Activated CD4-positive, alpha-beta T cell treated with anti-CD3 and anti-CD28 coated beads, Interleukin-2, amount 10 ng/mL, durations not matched to agents 24 days and 14 days (primary cell): ENCODE measurements at regions of chr2 and their contacts with region 1.

Region 1: GRCh38 chr2:135004005-135004746 is 43.1 kb downstream of the MAP3K19 start:
- DNase-seq: peak; percentile 91
- H3K4me3 Mint-ChIP-seq: peak overlapping the region; percentile 30
- H3K27ac Mint-ChIP-seq: no peak overlapping the region
- H3K4me1 Mint-ChIP-seq: peaks cover 5% of the 10 kb centered on the region
- H3K27me3 Mint-ChIP-seq: peaks cover 21% of the 10 kb centered on the region

Region 2: DNA sequence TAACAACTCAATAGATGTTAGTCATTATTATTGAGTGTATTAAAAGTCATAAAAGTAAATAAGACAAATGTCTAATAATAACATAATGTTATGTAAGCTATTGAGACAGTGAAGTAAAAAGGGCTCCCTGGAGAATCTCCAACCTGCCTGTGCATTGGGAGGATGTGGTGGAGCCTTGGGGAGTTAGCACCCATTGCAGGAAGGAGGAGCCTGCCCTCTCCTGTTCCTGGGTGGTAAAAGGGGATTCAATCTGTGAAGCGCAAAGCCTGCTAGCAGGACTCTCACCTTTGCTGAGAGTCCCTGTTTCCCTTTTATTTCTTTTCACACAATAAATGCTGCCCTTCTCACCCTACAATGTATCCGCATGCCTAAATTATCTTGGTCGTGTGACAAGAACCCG is 254.0 kb after region 1 on chr2:
- intact Hi-C with region 1: loop called (anchors 10 kb)
- DNase-seq: no peak
- H3K4me3 Mint-ChIP-seq: no peak overlapping the region
- H3K27ac Mint-ChIP-seq: no peak overlapping the region
- H3K4me1 Mint-ChIP-seq: no peaks in the 10 kb centered on the region
- H3K27me3 Mint-ChIP-seq: no peaks in the 10 kb centered on the region

Region 3: GRCh38 chr2:135473567-135473966 is 469.4 kb after region 1 on chr2:
- intact Hi-C with region 1: loop called (anchors 10 kb)
- DNase-seq: peak; percentile 68
- H3K4me3 Mint-ChIP-seq: no peak overlapping the region
- H3K27ac Mint-ChIP-seq: no peak overlapping the region
- H3K4me1 Mint-ChIP-seq: no peaks in the 10 kb centered on the region
- H3K27me3 Mint-ChIP-seq: no peaks in the 10 kb centered on the region

Region 4: DNA sequence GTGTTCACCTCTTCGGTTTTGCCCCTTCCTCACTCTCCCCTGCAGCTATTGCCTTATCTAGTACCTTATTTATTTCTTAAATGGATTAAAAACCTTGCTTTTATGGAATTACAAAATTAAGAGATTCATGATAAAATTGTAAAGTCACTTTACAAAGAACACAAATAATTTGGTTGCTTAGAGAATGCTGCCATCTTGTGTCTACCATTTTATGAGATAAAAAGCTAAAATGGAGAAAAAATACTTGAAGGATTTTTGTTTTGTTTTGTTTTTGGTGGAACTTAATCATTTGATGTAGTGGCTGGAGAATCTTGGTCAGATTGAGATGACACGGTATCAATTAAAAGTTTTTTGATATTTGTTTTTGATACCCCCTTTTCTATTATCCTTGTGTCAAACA is 596.7 kb after region 1 on chr2:
- intact Hi-C with region 1: loop called (anchors 2 kb)
- DNase-seq: no peak
- H3K4me3 Mint-ChIP-seq: no peak overlapping the region
- H3K27ac Mint-ChIP-seq: no peak overlapping the region
- H3K4me1 Mint-ChIP-seq: no peaks in the 10 kb centered on the region
- H3K27me3 Mint-ChIP-seq: no peaks in the 10 kb centered on the region

Region 5: DNA sequence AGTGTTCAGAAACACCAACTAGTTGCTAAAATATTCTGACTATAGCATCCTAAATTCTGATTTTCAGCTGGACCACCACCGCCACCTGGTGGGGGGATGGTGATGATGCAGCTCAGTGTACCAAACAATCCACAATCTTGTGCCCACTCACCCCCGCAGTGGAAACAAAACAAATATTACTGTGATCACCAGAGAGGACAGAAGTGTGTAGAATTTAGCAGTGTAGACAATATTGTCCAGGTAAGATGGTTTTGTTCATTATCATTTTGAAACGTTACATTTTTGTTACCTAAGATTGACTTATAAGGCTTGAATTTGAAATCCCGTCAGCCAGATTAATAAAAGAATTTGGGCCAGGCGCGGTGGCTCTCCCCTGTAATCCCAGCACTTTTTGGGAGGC is 705.8 kb after region 1 on chr2:
- intact Hi-C with region 1: loop called (anchors 1 kb)
- DNase-seq: peak; percentile 91
- H3K4me3 Mint-ChIP-seq: no peak overlapping the region
- H3K27ac Mint-ChIP-seq: no peak overlapping the region
- H3K4me1 Mint-ChIP-seq: peaks cover 2% of the 10 kb centered on the region
- H3K27me3 Mint-ChIP-seq: no peaks in the 10 kb centered on the region

Region 6: DNA sequence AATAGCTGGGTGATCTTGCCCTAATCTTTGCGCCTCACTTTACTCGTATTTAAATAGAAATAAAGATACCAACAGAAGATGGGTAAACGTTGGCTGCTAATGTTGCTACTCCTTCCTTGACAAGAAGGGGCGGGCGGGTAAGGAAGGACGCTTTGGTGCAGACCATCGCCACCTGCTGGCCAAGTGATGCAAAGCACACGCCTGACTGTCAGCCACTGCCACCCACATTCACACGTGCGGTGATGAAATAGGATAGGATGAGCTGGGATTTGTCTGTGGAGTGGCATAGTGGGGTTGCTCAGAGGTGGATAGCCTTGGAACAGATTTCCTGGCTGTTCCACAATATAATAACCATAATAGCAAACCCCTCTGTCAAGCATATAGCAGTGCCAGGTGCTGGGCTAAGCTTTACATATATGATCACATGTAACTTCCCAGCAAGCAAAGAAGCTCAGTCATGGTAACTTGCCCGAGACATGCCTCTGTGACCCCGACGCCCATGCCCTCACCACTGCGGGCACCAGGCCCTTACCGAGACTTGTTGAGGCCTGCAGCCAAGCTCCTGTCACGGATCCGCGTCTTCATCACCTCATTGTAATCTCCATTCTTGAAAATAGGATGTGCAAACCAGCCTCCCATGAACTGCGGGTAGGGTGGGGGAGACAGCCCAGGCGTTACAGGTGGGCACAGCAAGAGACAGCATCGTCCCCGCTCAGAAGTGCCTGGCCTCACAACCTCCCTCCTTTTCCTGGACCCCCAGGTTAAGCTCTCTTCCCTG is 793.5 kb after region 1 on chr2:
- intact Hi-C with region 1: loop called (anchors 5 kb)
- DNase-seq: peak; percentile 92
- H3K4me3 Mint-ChIP-seq: no peak overlapping the region
- H3K27ac Mint-ChIP-seq: peak overlapping the region; percentile 34
- H3K4me1 Mint-ChIP-seq: peaks cover 15% of the 10 kb centered on the region
- H3K27me3 Mint-ChIP-seq: no peaks in the 10 kb centered on the region